GM12878 (cell line): ENCODE measurements at regions of chr16 and their contacts with region 1.

Region 1: GRCh38 chr16:86563489-86564345 is 2.9 kb upstream of the FOXC2 start:
- DNase-seq: peak; percentile 17
- ATAC-seq: peak; percentile 96
- H3K4me3 ChIP-seq: no peak overlapping the region
- H3K27ac ChIP-seq: no peak overlapping the region
- H3K4me1 ChIP-seq: no peaks in the 10 kb centered on the region
- H3K27me3 ChIP-seq: peaks cover 5 to 9% of the 10 kb centered on the region in 2 experiments
- CTCF ChIP-seq: peak; percentile 98 to 100 (median 100); a peak in 5 of 6 replicates
- EP300 ChIP-seq: no peak
- POLR2A ChIP-seq: no peak
- RAD21 ChIP-seq: peak; percentile 98

Region 2: GRCh38 chr16:86424398-86425367 is 139.0 kb before region 1 on chr16:
- CTCF ChIA-PET with region 1: no interaction called
- POLR2A ChIA-PET with region 1: no interaction called
- RAD21 ChIA-PET with region 1: no interaction called
- SMC1A ChIA-PET with region 1: no interaction called
- in situ Hi-C with region 1: no loop called
- intact Hi-C with region 1: no loop called
- DNase-seq: no peak
- ATAC-seq: no peak
- H3K4me3 ChIP-seq: no peak overlapping the region
- H3K27ac ChIP-seq: no peak overlapping the region
- H3K4me1 ChIP-seq: no peaks in the 10 kb centered on the region
- H3K27me3 ChIP-seq: no peaks in the 10 kb centered on the region; a peak in 1 of 4 replicates
- CTCF ChIP-seq: no peak
- EP300 ChIP-seq: no peak
- POLR2A ChIP-seq: no peak
- RAD21 ChIP-seq: no peak

Region 3: DNA sequence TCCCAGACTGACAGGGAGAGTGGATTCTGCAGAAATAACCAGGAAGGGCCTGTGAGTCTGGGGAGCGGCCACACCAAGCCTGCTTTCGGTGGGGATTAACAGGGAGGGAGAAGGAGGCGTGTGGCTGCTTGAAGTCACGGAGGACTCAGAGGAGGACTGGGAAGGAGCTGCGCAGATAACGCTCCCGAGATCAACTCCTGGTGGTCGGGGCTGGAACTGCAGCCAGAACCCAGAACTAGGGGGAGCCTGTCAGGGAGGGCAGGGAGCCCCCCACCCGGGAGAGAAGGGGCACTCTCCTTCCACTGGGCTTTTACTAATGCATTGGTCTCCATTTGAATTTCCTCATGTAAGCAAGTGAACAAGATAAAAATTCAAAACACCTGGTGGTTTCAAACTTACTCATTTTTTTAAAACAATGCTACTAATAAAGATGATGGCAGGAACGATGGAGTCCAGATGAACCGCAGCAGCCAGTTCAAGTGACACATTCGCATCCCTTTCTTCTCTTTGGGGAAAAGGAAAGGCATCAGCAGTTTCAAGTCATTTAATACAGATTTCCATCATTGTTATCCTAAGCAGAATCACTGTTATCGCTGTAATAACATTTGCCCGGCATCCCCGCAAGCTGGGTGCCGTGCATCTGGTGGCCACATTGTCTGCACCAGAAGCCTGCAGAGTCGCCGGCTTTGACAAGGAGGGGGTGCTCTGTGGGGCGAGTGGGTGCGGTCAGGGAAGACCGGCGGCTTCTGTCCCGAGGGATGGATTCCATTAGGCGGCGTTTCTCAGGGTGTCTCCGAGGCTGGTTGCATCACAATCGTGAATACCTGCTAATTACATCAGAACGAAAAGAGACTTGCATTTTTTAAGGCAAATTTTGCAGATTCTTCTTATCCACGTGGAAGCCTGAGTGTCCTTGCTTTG is 197.7 kb after region 1 on chr16:
- CTCF ChIA-PET with region 1: interaction called, 4 read pairs
- POLR2A ChIA-PET with region 1: no interaction called
- RAD21 ChIA-PET with region 1: interaction called, 3 read pairs
- SMC1A ChIA-PET with region 1: interaction called, 4 read pairs
- in situ Hi-C with region 1: no loop called
- intact Hi-C with region 1: loop called (anchors 10 kb)
- DNase-seq: no peak
- ATAC-seq: peak; percentile 82
- H3K4me3 ChIP-seq: no peak overlapping the region
- H3K27ac ChIP-seq: no peak overlapping the region
- H3K4me1 ChIP-seq: no peaks in the 10 kb centered on the region
- H3K27me3 ChIP-seq: 0 out of 4 replicates have a peak, but pooled peaks cover 0 to 2% of the 10 kb centered on the region in 2 experiments
- CTCF ChIP-seq: peak; percentile 46 to 80 (median 67)
- EP300 ChIP-seq: no peak
- POLR2A ChIP-seq: no peak
- RAD21 ChIP-seq: no peak

Region 4: GRCh38 chr16:87062569-87063442 is 499.1 kb after region 1 on chr16:
- CTCF ChIA-PET with region 1: interaction called, 89 read pairs
- POLR2A ChIA-PET with region 1: no interaction called
- RAD21 ChIA-PET with region 1: interaction called, 25 read pairs
- SMC1A ChIA-PET with region 1: interaction called, 50 read pairs
- in situ Hi-C with region 1: loop called (anchors 5 kb)
- intact Hi-C with region 1: loop called (anchors 1 kb)
- DNase-seq: no peak
- ATAC-seq: peak; percentile 85
- H3K4me3 ChIP-seq: no peak overlapping the region
- H3K27ac ChIP-seq: no peak overlapping the region
- H3K4me1 ChIP-seq: no peaks in the 10 kb centered on the region
- H3K27me3 ChIP-seq: peaks cover 0 to 4% of the 10 kb centered on the region in 2 experiments; a peak in 2 of 4 replicates
- CTCF ChIP-seq: peak; percentile 67 to 74 (median 69)
- EP300 ChIP-seq: no peak
- POLR2A ChIP-seq: no peak
- RAD21 ChIP-seq: peak; percentile 64

Region 5: DNA sequence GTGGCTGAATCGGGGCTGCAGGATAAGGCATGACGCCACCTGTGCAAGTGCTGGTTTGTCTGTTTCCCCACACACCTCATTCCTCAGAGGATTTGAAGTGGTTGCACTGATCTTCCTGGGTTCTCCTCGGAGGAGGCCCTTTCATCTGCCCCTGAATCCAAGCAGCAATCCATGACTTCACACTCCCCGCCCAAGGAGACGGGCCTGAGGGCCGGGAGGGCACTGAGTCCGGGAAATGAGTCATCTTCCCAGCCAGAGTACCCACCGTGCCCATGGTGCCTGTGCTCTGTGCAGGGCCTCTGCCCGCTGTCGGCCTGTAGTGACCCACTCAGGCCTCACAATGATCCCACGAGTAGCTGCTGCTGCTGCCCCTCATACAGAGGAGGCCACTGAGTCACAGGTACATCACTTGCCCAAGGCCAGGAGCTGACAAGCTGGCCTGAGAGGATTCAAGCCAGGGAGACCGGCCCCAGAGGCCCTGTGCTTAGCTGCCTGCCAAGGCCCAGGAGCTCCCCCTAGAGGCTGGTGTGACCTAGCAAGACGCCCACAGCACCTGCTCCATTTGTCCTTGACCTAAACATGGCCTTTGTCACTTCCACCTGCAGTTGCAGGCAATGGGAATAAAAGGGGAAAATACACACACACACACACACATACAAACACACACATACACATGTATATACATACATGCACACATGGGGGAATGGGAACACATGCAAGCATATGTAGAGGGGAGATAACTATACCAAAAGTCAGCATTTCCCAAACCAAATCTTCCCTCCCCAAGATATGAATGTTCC is 513.4 kb after region 1 on chr16:
- CTCF ChIA-PET with region 1: no interaction called
- POLR2A ChIA-PET with region 1: no interaction called
- RAD21 ChIA-PET with region 1: interaction called, 3 read pairs
- SMC1A ChIA-PET with region 1: no interaction called
- in situ Hi-C with region 1: no loop called
- intact Hi-C with region 1: loop called (anchors 5 kb)
- DNase-seq: no peak
- ATAC-seq: peak; percentile 77
- H3K4me3 ChIP-seq: no peak overlapping the region
- H3K27ac ChIP-seq: no peak overlapping the region
- H3K4me1 ChIP-seq: peaks cover 13% of the 10 kb centered on the region
- H3K27me3 ChIP-seq: no peaks in the 10 kb centered on the region; a peak in 1 of 4 replicates
- CTCF ChIP-seq: peak; percentile 60 to 68 (median 61)
- EP300 ChIP-seq: no peak
- POLR2A ChIP-seq: no peak
- RAD21 ChIP-seq: peak; percentile 36

Region 6: GRCh38 chr16:87297918-87298631 is 734.4 kb after region 1 on chr16:
- CTCF ChIA-PET with region 1: interaction called, 5 read pairs
- POLR2A ChIA-PET with region 1: no interaction called
- RAD21 ChIA-PET with region 1: interaction called, 3 read pairs
- SMC1A ChIA-PET with region 1: no interaction called
- in situ Hi-C with region 1: no loop called
- intact Hi-C with region 1: loop called (anchors 5 kb)
- DNase-seq: no peak
- ATAC-seq: peak; percentile 80
- H3K4me3 ChIP-seq: no peak overlapping the region
- H3K27ac ChIP-seq: no peak overlapping the region
- H3K4me1 ChIP-seq: no peaks in the 10 kb centered on the region
- H3K27me3 ChIP-seq: no peaks in the 10 kb centered on the region
- CTCF ChIP-seq: peak; percentile 51 to 65 (median 60)
- EP300 ChIP-seq: no peak
- POLR2A ChIP-seq: no peak
- RAD21 ChIP-seq: peak; percentile 28; the same call in 1 of the 2 replicates